ENCODE measurements at regions of chr11 and their contacts with region 1.

Region 1: GRCh38 chr11:85941380-85941973 is 86.3 kb downstream of the CCDC83 start:
- DNase-seq: peak; percentile 71
- ATAC-seq: peak; percentile 86

Region 2: DNA sequence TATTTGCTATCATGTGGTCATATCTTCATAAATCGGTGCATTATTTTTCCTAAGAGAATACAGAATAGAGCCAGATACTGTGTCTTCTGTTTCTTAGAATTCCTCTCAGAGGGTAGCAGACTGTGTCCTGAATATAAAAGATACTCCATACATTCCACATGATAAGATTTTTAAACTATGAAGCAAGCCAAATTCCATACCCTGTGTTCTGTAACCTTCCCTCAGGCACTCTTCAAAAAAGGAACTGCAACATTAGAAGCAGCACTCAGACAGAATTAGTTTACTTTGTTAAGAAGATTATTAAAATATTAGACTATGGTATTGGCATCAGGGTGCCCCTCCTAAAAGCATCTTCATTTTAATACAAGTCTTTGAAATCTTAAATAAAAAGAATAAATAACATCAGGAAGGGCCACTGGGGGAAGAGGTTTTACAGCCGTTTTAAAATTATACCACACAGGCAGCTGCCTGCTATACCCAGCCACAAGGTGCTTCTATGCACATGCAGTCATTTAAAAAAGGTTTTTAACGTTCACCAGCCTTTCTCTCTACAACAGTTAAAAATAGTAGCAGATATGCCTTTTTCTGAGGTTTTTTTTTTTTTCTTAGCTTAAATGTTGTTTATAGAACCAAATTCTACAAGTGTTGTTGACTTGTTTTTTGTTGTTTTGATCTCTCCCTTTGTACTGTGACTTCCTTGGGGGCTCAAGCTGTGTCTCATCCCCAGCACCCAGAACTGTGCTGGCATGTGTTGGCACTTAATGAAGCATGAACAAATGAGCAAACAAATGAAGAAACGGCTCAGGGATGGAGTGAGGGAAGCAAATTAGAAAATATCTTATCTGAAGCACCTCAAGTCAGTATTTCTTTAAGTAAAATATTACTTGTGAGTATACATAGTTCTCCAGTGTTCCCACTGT is 200.7 kb before region 1 on chr11:
- intact Hi-C with region 1: no loop called
- DNase-seq: no peak
- ATAC-seq: no peak

Region 3: DNA sequence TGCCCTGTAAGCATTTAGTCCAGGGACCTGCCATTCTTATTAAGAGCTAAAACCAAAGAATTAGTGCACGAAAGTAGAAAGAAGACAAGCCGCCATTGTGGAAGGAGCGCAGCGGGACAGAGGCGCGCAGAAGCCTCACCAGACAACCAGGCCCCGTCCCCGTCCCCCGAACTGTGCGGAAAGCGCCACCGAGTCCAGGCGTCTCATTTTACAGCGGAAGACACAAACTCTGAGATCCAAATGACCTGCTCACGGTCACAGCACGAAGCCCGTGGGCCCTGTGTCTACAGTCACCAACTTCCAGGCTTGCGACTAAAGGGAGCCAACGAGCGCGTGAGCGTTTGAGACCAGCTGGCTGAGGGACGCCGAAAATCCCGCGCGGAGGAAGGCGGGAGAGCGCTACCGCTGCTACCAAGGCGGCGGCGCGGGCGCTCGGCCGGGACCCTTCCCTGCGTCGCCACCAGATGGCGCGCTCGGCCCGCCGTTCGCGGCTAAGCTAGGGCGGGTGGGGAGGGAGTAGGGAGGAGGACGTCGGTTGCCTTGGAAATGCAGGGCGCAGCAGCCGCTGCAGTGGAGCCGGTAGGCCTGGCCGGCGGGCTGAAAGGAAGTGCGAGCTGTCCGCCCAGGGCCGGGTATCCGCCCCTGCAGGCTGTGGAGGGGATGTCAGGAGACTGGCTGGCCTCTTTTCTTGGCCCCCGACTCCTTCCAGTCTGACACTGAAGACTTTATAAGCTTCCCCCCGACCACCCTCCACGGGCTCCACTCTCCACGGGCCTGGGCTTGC is 86.7 kb before region 1 on chr11:
- intact Hi-C with region 1: loop called (anchors 5 kb)
- DNase-seq: peak; percentile 94
- ATAC-seq: peak; percentile 98

Region 4: GRCh38 chr11:85922367-85922766 is 19.1 kb before region 1 on chr11:
- intact Hi-C with region 1: no loop called
- DNase-seq: no peak
- ATAC-seq: no peak

Region 5: GRCh38 chr11:86218125-86219084 is 276.9 kb after region 1 on chr11:
- intact Hi-C with region 1: loop called (anchors 5 kb)
- DNase-seq: peak; percentile 86
- ATAC-seq: peak; percentile 94